GM12878 (cell line): ENCODE measurements at regions of chr14 and their contacts with region 1.

Region 1: GRCh38 chr14:103808403-103809001 is 38.9 kb downstream of the PPP1R13B start:
- DNase-seq: no peak
- ATAC-seq: peak; percentile 89
- H3K4me3 ChIP-seq: no peak overlapping the region
- H3K27ac ChIP-seq: no peak overlapping the region
- H3K4me1 ChIP-seq: peaks cover 30% of the 10 kb centered on the region
- H3K27me3 ChIP-seq: no peaks in the 10 kb centered on the region
- CTCF ChIP-seq: peak; percentile 79 to 88 (median 85)
- EP300 ChIP-seq: no peak
- POLR2A ChIP-seq: no peak
- RAD21 ChIP-seq: peak; percentile 91

Region 2: GRCh38 chr14:103600503-103600902 is 208.0 kb before region 1 on chr14:
- CTCF ChIA-PET with region 1: no interaction called
- POLR2A ChIA-PET with region 1: no interaction called
- RAD21 ChIA-PET with region 1: no interaction called
- SMC1A ChIA-PET with region 1: no interaction called
- in situ Hi-C with region 1: no loop called
- intact Hi-C with region 1: no loop called
- DNase-seq: no peak
- ATAC-seq: no peak
- H3K4me3 ChIP-seq: no peak overlapping the region
- H3K27ac ChIP-seq: no peak overlapping the region
- H3K4me1 ChIP-seq: no peaks in the 10 kb centered on the region; the same call in 1 of the 2 replicates
- H3K27me3 ChIP-seq: no peaks in the 10 kb centered on the region
- CTCF ChIP-seq: no peak
- EP300 ChIP-seq: no peak
- POLR2A ChIP-seq: no peak
- RAD21 ChIP-seq: no peak

Region 3: GRCh38 chr14:103788086-103788485 is 20.4 kb before region 1 on chr14:
- CTCF ChIA-PET with region 1: interaction called, 12 read pairs
- POLR2A ChIA-PET with region 1: no interaction called
- RAD21 ChIA-PET with region 1: no interaction called
- SMC1A ChIA-PET with region 1: interaction called, 3 read pairs
- in situ Hi-C with region 1: no loop called
- intact Hi-C with region 1: no loop called
- DNase-seq: no peak
- ATAC-seq: no peak
- H3K4me3 ChIP-seq: no peak overlapping the region
- H3K27ac ChIP-seq: no peak overlapping the region
- H3K4me1 ChIP-seq: no peaks in the 10 kb centered on the region
- H3K27me3 ChIP-seq: no peaks in the 10 kb centered on the region
- CTCF ChIP-seq: no peak
- EP300 ChIP-seq: no peak
- POLR2A ChIP-seq: no peak
- RAD21 ChIP-seq: no peak

Region 4: GRCh38 chr14:103825101-103825500 is 16.6 kb after region 1 on chr14:
- CTCF ChIA-PET with region 1: interaction called, 27 read pairs
- POLR2A ChIA-PET with region 1: interaction called, 4 read pairs
- RAD21 ChIA-PET with region 1: interaction called, 7 read pairs
- SMC1A ChIA-PET with region 1: interaction called, 12 read pairs
- in situ Hi-C with region 1: no loop called
- intact Hi-C with region 1: no loop called
- DNase-seq: no peak
- ATAC-seq: no peak; the same call in 2 of the 3 replicates
- H3K4me3 ChIP-seq: no peak overlapping the region
- H3K27ac ChIP-seq: no peak overlapping the region
- H3K4me1 ChIP-seq: peaks cover 4% of the 10 kb centered on the region
- H3K27me3 ChIP-seq: no peaks in the 10 kb centered on the region
- CTCF ChIP-seq: no peak
- EP300 ChIP-seq: no peak
- POLR2A ChIP-seq: no peak
- RAD21 ChIP-seq: no peak

Region 5: DNA sequence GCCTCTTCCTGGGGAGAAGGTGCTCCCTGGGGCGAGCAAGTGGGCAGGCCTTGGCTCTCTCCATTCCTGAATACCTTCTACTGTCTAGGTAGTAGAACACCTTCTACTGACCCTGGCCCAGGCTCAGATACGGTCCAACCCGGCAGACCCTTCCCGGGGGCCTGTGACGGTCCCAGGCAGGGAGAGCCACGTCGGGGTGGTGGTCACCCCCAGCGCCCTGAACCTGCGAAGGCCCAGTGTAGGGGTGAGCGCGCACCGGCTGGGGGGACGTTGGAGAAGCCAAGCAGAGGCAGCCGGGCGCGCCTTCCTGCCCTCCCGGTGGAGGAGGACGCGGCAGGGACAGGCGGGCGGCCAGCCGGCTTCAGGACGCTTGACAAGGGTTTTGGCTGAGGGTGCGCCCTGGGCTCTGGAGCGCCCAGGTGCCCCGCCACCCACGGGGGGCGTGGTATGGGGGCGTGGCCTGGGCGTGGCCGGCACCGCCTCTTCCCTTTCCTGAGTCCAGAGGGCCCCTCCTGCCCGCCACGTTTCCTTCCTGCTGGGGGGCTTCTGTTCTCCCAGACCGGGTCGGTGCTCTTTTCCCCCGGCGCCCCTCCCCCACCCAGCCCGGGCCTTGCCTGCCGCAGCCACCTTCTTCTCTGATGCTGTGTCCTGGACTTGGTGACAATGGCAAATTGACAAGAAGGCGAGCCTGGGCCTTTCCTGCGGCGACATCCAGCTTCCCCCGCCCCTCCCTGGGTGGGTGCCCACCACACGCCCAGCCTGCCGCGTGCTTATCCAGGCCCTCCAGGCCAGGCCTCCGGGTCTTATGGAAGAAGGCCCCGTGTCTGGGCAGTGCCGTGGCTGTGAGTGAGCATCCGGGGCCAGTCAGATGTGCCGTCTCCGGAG is 63.3 kb after region 1 on chr14:
- CTCF ChIA-PET with region 1: interaction called, 5 read pairs
- POLR2A ChIA-PET with region 1: no interaction called
- RAD21 ChIA-PET with region 1: interaction called, 5 read pairs
- SMC1A ChIA-PET with region 1: no interaction called
- in situ Hi-C with region 1: no loop called
- intact Hi-C with region 1: loop called (anchors 2 kb)
- DNase-seq: peak; percentile 12
- ATAC-seq: peak; percentile 97
- H3K4me3 ChIP-seq: peak overlapping the region; percentile 76
- H3K27ac ChIP-seq: peak overlapping the region; percentile 47
- H3K4me1 ChIP-seq: peaks cover 10% of the 10 kb centered on the region
- H3K27me3 ChIP-seq: no peaks in the 10 kb centered on the region
- CTCF ChIP-seq: no peak
- EP300 ChIP-seq: no peak
- POLR2A ChIP-seq: peak; percentile 41; the same call in 1 of the 2 replicates
- RAD21 ChIP-seq: no peak

Region 6: GRCh38 chr14:103910262-103910935 is 101.9 kb after region 1 on chr14:
- CTCF ChIA-PET with region 1: interaction called, 81 read pairs
- POLR2A ChIA-PET with region 1: no interaction called
- RAD21 ChIA-PET with region 1: interaction called, 24 read pairs
- SMC1A ChIA-PET with region 1: interaction called, 25 read pairs
- in situ Hi-C with region 1: loop called (anchors 5 kb)
- intact Hi-C with region 1: loop called (anchors 1 kb)
- DNase-seq: peak; percentile 9
- ATAC-seq: peak; percentile 89
- H3K4me3 ChIP-seq: no peak overlapping the region
- H3K27ac ChIP-seq: no peak overlapping the region
- H3K4me1 ChIP-seq: no peaks in the 10 kb centered on the region
- H3K27me3 ChIP-seq: no peaks in the 10 kb centered on the region
- CTCF ChIP-seq: peak; percentile 69 to 80 (median 74)
- EP300 ChIP-seq: no peak
- POLR2A ChIP-seq: peak; percentile 34; the same call in 1 of the 2 replicates
- RAD21 ChIP-seq: peak; percentile 84

Region 7: GRCh38 chr14:103960457-103961055 is 152.1 kb after region 1 on chr14:
- CTCF ChIA-PET with region 1: no interaction called
- POLR2A ChIA-PET with region 1: no interaction called
- RAD21 ChIA-PET with region 1: no interaction called
- SMC1A ChIA-PET with region 1: no interaction called
- in situ Hi-C with region 1: no loop called
- intact Hi-C with region 1: no loop called
- DNase-seq: no peak
- ATAC-seq: no peak
- H3K4me3 ChIP-seq: no peak overlapping the region
- H3K27ac ChIP-seq: no peak overlapping the region
- H3K4me1 ChIP-seq: no peaks in the 10 kb centered on the region
- H3K27me3 ChIP-seq: no peaks in the 10 kb centered on the region; a peak in 2 of 4 replicates
- CTCF ChIP-seq: no peak
- EP300 ChIP-seq: no peak
- POLR2A ChIP-seq: no peak
- RAD21 ChIP-seq: no peak

Region 8: DNA sequence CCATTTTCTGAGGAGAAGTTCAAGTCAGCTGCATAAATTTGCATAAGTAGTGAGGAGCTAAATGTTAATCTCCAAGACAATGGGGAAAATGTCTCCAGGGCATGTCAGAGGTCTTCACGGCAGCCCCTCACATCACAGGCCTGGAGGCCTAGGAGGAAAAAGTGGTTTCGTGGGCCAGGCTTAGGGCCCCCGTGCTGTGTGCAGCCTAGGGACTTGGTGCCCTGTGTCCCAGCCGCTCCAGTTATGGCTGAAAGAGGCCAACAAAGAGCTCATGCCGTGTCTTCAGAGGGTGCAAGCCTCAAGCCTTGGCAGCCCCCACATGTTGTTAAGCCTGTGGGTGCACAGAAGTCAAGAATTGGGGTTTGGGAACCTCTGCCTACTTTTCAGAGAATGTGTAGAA is 175.7 kb after region 1 on chr14:
- CTCF ChIA-PET with region 1: interaction called, 96 read pairs
- POLR2A ChIA-PET with region 1: no interaction called
- RAD21 ChIA-PET with region 1: interaction called, 24 read pairs
- SMC1A ChIA-PET with region 1: interaction called, 17 read pairs
- in situ Hi-C with region 1: loop called (anchors 5 kb)
- intact Hi-C with region 1: loop called (anchors 1 kb)
- DNase-seq: no peak
- ATAC-seq: no peak
- H3K4me3 ChIP-seq: no peak overlapping the region
- H3K27ac ChIP-seq: no peak overlapping the region
- H3K4me1 ChIP-seq: no peaks in the 10 kb centered on the region
- H3K27me3 ChIP-seq: no peaks in the 10 kb centered on the region
- CTCF ChIP-seq: no peak
- EP300 ChIP-seq: no peak
- POLR2A ChIP-seq: no peak
- RAD21 ChIP-seq: no peak

Region 9: GRCh38 chr14:104665657-104666522 is 857.4 kb after region 1 on chr14:
- CTCF ChIA-PET with region 1: no interaction called
- POLR2A ChIA-PET with region 1: no interaction called
- RAD21 ChIA-PET with region 1: no interaction called
- SMC1A ChIA-PET with region 1: no interaction called
- in situ Hi-C with region 1: no loop called
- intact Hi-C with region 1: no loop called
- DNase-seq: no peak
- ATAC-seq: peak; percentile 71
- H3K4me3 ChIP-seq: no peak overlapping the region
- H3K27ac ChIP-seq: peak overlapping the region; percentile 48; the same call in 1 of the 2 replicates
- H3K4me1 ChIP-seq: peaks cover 17% of the 10 kb centered on the region
- H3K27me3 ChIP-seq: no peaks in the 10 kb centered on the region
- CTCF ChIP-seq: peak in 2 of 3 experiments; percentile 25 to 37; a peak in 2 of 6 replicates
- EP300 ChIP-seq: no peak
- POLR2A ChIP-seq: no peak
- RAD21 ChIP-seq: no peak